ENCODE measurements at regions of chr11 and their contacts with region 1.

Region 1: GRCh38 chr11:33996498-33997454 is 54.8 kb upstream of the CAPRIN1 start:
- DNase-seq: peak; percentile 85
- ATAC-seq: peak; percentile 100
- H3K4me3 Mint-ChIP-seq: peak overlapping the region; percentile 40
- H3K27ac Mint-ChIP-seq: no peak overlapping the region
- H3K4me1 Mint-ChIP-seq: peaks cover 8% of the 10 kb centered on the region
- H3K27me3 Mint-ChIP-seq: peaks cover 25% of the 10 kb centered on the region
- CTCF ChIP-seq: peak; percentile 85

Region 2: DNA sequence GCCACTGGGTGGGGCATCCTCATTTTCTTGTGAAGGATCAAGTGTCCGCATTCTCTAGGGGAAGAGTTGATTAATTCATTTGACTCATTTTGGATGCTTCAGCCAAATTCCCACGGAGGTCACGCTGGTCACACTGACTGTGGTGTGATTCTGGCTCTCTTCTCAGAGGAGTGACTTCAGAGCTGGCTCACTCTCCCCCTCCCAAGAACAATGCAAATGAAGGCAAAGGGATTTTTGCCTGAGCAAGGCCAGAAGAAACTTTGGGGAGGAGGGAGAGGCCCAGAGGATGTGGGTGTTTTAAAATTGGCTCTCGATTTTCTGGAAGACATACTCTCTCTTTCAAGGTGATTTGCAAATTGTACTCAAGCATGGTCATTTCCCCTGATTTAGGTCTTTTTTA is 53.8 kb before region 1 on chr11:
- CTCF ChIA-PET with region 1: no interaction called
- POLR2A ChIA-PET with region 1: no interaction called
- intact Hi-C with region 1: no loop called
- DNase-seq: no peak
- ATAC-seq: no peak
- H3K4me3 Mint-ChIP-seq: no peak overlapping the region
- H3K27ac Mint-ChIP-seq: no peak overlapping the region
- H3K4me1 Mint-ChIP-seq: no peaks in the 10 kb centered on the region
- H3K27me3 Mint-ChIP-seq: peaks cover 5% of the 10 kb centered on the region
- CTCF ChIP-seq: no peak

Region 3: GRCh38 chr11:33959855-33960400 is 36.8 kb before region 1 on chr11:
- CTCF ChIA-PET with region 1: no interaction called
- POLR2A ChIA-PET with region 1: no interaction called
- intact Hi-C with region 1: no loop called
- DNase-seq: no peak
- ATAC-seq: no peak
- H3K4me3 Mint-ChIP-seq: no peak overlapping the region
- H3K27ac Mint-ChIP-seq: no peak overlapping the region
- H3K4me1 Mint-ChIP-seq: no peaks in the 10 kb centered on the region
- H3K27me3 Mint-ChIP-seq: peaks cover 13% of the 10 kb centered on the region
- CTCF ChIP-seq: no peak

Region 4: GRCh38 chr11:34006876-34007275 is 10.1 kb after region 1 on chr11:
- CTCF ChIA-PET with region 1: interaction called, 27 read pairs
- POLR2A ChIA-PET with region 1: no interaction called
- intact Hi-C with region 1: no loop called
- DNase-seq: no peak
- ATAC-seq: no peak
- H3K4me3 Mint-ChIP-seq: no peak overlapping the region
- H3K27ac Mint-ChIP-seq: no peak overlapping the region
- H3K4me1 Mint-ChIP-seq: no peaks in the 10 kb centered on the region
- H3K27me3 Mint-ChIP-seq: peaks cover 3% of the 10 kb centered on the region
- CTCF ChIP-seq: no peak

Region 5: DNA sequence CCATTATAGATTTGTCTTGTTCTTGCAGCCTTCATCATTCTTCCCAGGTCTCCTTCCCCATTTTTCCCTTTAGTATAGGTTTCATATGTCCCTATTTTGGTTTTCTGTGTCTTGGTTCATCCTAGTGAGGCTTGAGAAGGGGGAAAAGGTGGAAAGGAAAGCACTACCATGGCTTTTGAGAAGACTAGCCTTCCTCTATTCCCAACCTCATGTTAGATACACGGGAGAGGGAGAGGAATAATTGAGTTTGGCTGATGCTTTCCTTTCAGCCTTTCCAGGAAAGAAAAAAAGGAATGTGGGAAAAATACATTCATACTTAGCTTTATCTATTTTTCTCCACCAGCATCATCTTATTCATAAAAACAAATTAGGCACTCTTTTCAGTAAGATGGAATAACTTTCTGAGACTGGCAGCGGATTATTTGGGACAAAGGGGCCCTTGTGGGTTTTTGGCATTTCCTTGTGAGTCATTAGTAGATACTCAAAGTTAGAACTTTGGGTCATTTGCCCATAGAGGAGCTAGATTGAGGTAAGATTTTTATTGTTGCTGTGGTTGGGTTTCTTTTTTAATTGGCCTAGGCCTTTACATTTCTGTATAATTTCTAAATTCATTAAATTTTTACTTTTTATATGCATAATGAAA is 78.5 kb after region 1 on chr11:
- CTCF ChIA-PET with region 1: interaction called, 11 read pairs
- POLR2A ChIA-PET with region 1: interaction called, 3 read pairs
- intact Hi-C with region 1: no loop called
- DNase-seq: no peak
- ATAC-seq: no peak
- H3K4me3 Mint-ChIP-seq: no peak overlapping the region
- H3K27ac Mint-ChIP-seq: peak overlapping the region; percentile 67
- H3K4me1 Mint-ChIP-seq: peaks cover 41% of the 10 kb centered on the region
- H3K27me3 Mint-ChIP-seq: no peaks in the 10 kb centered on the region
- CTCF ChIP-seq: no peak

Region 6: DNA sequence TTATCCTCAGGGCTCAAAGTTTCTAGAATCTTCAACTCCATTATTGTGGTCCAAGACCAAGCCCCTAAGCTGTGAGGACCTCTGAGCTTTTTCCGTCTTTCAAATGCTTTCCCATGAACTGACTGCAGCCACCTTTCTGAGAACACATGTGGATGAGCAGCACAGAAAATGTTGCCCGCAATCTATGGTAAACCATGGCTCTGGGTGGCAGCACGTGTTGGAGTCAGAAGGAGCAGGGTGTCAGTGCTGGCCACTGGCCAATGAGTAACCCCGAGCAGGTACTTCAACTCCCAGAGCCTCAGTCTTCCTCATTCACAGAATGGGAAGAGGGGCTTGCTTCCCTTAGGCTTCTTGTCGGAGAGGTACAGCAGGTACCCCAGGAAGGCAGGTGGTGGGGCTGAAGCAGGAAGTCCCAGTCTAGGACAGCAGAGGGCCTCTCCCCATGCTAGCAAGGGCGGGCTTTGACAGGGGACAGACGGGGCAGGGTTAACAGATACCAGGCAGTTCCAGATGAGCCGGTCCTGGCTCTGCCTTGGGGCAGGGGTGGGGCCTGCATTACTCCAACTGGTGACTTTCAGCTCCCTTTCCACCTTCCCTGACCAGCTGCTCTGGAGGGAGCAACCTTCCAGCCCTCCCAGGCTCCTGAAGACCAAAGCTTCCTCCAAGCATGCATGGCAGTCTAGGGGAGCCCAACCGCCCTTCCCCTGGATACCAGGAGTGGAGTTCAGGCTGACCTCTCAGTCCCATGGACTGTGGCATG is 168.9 kb after region 1 on chr11:
- CTCF ChIA-PET with region 1: no interaction called
- POLR2A ChIA-PET with region 1: no interaction called
- intact Hi-C with region 1: loop called (anchors 5 kb)
- DNase-seq: no peak
- ATAC-seq: no peak
- H3K4me3 Mint-ChIP-seq: no peak overlapping the region
- H3K27ac Mint-ChIP-seq: no peak overlapping the region
- H3K4me1 Mint-ChIP-seq: peaks cover 9% of the 10 kb centered on the region
- H3K27me3 Mint-ChIP-seq: no peaks in the 10 kb centered on the region
- CTCF ChIP-seq: no peak

Region 7: DNA sequence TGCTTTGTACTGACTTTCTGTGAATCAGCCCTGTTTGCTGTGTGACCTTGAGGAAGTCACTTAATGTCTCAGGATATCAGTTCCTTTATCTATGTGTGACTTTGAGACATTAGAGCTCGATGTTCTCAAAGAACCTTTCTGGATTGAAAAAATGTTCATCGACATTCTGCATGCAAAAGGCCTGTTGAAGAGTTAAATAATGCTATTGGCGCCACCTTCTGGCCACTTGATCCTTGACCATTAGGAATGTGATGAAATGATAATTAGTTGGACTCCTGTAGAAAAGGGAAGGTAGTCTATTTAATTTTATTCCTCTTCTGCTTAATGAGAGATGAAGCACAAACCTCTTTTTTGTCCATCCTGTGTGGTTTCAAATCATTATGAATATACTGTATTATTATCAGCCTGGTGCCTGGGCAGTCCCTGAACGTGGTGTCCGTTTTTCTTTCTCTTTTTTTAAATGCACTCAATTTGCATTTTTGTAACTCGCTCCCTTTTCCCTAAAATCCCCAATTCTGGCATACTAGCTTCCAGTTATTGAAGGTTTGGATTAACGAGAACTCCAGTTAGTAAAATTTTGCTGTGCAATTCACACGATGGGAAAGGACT is 496.1 kb after region 1 on chr11:
- CTCF ChIA-PET with region 1: interaction called, 6 read pairs
- POLR2A ChIA-PET with region 1: no interaction called
- intact Hi-C with region 1: loop called (anchors 5 kb)
- DNase-seq: peak; percentile 78
- ATAC-seq: no peak
- H3K4me3 Mint-ChIP-seq: no peak overlapping the region
- H3K27ac Mint-ChIP-seq: no peak overlapping the region
- H3K4me1 Mint-ChIP-seq: no peaks in the 10 kb centered on the region
- H3K27me3 Mint-ChIP-seq: peaks cover 1% of the 10 kb centered on the region
- CTCF ChIP-seq: peak; percentile 83

Measured in activated CD8-positive, alpha-beta T cell treated with anti-CD3 and anti-CD28 coated beads for 36 hours (primary cell).